Activated naive CD4-positive, alpha-beta T cell treated with anti-CD3 and anti-CD28 coated beads for 36 hours (primary cell): ENCODE measurements at regions of chr1 and their contacts with region 1.

Region 1: DNA sequence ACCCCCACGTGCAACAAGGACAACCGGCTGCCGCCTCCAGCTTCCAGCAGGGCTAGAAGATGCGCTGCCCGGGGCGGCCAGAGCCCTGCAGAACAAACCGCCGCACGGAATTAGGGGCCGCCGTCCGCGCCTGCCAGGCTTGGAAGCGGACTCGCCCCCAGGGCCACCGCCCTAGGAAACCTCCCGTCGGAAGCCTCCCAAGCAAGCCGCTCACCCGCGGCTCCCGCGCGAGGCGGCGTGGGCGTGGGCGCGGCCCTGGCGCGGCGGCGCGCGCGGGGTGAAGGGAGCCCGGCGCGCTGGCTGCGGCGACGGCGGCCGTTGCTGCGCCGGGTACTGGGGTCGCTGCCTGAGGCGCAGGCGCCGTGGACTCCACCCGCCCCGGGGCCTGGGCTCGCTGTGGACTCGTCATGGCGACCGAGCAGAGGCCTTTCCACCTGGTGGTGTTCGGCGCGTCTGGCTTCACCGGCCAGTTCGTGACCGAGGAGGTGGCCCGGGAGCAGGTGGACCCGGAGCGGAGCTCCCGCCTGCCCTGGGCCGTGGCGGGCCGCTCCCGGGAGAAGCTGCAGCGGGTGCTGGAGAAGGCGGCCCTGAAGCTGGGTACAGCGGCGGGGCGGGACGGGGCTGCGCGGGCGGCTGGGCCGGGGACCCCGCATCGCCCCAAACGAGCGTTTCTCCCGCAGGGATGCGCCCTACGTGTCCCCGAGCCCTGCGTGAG is at the start of gene SCCPDH:
- DNase-seq: peak; percentile 64
- H3K4me3 Mint-ChIP-seq: peak within 1 kb of the TSS; percentile 88
- H3K27ac Mint-ChIP-seq: peak within 1 kb of the TSS; percentile 66
- H3K4me1 Mint-ChIP-seq: peaks cover 10% of the 10 kb centered on the region
- H3K27me3 Mint-ChIP-seq: no peaks in the 10 kb centered on the region
- total RNA-seq, gene SCCPDH: 23.8 to 24.3 TPM

Region 2: DNA sequence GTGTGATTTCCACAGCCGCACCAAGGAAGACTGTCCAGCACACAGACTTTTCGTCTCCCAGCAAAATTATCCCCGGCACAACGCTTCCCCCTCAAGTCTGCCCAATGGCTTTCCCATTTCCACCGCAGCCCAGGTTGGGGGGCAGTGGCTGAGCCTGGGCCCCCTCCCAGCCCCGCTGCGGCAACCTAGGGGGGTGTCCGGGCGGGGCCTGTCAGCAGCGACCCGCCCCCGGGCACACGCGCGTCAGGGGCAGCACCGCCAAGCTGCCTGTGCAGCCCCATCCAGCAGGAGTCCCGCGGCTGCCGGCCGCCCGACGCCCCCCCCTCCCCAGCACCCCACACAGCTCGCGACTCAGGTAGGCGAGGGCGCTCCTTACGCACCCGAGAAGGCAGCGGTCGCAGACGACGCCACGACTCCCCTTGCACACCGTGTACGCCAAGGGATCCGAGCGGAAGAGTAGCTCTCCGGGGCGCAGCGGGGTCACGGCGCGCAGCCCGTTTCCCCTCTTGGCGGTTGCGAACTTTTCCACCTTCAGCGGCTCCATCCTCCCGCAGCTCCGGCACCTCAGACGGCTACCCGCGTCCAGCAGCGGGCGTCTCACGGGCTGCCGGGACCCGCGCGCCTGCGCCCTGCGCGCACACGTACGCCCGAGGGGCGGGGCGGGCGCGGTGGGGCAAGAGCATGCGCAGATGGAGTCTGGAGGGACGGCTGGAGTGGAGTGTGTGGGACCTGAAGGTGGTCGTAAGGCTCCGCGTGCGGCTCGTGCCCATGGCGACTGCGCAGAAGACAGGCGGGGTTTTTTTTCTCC is 217.3 kb before region 1 on chr1 and contains the start of gene SMYD3:
- CTCF ChIA-PET with region 1: no interaction called
- intact Hi-C with region 1: loop called (anchors 1 kb)
- DNase-seq: peak; percentile 73
- H3K4me3 Mint-ChIP-seq: peak within 1 kb of the TSS; percentile 95
- H3K27ac Mint-ChIP-seq: peak within 1 kb of the TSS; percentile 89
- H3K4me1 Mint-ChIP-seq: peaks cover 15% of the 10 kb centered on the region
- H3K27me3 Mint-ChIP-seq: no peaks in the 10 kb centered on the region
- total RNA-seq, gene SMYD3: 21.3 to 21.4 TPM